Left cardiac atrium (tissue), 4 donors: ENCODE measurements at regions of chr6 and their contacts with region 1.

Region 1: DNA sequence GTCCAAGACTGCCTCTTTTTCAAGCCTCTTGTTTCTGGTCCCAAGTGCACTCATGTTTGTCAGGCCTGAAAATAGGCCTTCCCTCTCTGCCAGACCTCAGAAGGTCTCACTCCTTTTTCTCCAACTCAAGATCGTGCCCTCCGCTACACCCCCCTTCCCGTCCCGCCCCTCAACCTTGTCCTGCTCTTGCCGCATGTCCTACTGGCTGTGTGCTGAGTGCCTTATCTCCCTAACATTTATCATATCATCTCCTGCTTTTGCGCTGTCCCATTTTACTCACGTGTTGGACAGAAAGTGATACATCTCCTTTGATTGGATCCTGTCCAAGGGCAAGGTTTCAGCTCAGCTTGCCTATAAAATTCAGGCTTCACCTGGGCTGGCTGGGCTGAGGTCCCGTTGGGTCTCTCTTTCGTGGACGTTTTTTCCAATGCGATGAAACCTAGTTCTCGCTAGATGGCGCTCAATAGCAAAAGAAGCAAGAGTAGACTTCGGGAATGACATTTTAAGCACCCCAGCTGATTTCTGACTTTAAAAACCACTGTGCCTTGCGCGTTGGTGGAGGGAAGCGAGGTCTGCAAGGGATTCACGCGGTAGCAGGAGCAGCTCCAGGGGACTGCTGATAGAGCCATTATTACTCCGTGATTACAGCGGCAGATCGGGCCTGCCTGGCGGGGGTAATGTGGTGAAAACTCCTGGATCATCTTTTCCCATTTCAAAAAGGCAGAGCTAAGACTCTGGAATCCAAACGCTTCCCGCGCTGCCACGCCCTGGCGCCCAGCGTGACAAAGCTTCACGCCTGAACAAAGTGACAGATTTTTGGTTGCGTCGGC is 137.6 kb downstream of the IMPG1 start:
- DNase-seq: no peak
- ATAC-seq: peak; percentile 60 to 67

Region 2: GRCh38 chr6:76351275-76351674 is 416.4 kb after region 1 on chr6:
- intact Hi-C with region 1: loop called in 1 of 2 experiments (anchors 5 kb)
- DNase-seq: no peak
- ATAC-seq: no peak

Region 3: GRCh38 chr6:76861403-76861802 is 926.5 kb after region 1 on chr6:
- intact Hi-C with region 1: loop called in 1 of 2 experiments (anchors 10 kb)
- DNase-seq: no peak
- ATAC-seq: no peak

Region 4: GRCh38 chr6:77457720-77458349 is 1523.0 kb after region 1 on chr6:
- intact Hi-C with region 1: loop called in 1 of 2 experiments (anchors 2 kb)
- DNase-seq: peak; percentile 69
- ATAC-seq: peak; percentile 92 to 93